HepG2 (cell line): ENCODE measurements at regions of chr7 and their contacts with region 1.

Region 1: DNA sequence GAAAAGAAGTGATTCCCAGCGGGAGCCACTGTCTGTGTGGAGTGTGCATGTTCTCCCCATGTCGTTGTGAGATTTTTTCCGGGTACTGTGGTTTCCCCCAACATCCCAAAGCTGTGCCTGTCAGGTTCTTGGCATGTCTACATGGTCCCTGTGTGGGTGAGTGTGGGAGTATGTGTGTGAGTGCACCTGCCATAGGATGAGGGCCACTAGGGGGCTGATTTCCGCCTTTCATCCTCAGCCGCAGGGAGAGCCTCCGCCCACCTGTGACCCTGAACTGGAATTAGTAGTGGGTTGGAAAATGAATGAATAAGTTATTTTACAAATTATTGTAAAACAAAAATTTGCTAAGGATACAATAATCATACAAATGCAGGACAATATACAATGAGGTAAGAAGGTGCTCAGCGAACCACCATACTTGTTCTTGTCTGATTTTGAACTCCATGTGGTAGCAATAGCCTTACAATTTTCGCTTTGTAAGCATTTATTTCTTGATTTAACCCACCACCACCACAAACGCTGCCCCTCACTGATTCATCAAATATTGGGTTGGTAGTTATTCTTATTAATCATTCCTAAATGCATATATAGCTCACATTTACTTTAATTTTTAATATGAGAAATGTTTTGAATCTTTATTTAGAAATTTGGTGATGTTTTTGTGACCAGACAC is 641.2 kb upstream of the VSTM2A start:
- DNase-seq: no peak
- ATAC-seq: no peak
- H3K4me3 ChIP-seq: no peak overlapping the region
- H3K27ac ChIP-seq: no peak overlapping the region
- H3K4me1 ChIP-seq: no peaks in the 10 kb centered on the region
- H3K27me3 ChIP-seq: no peaks in the 10 kb centered on the region
- CTCF ChIP-seq: no peak
- EP300 ChIP-seq: no peak
- POLR2A ChIP-seq: no peak
- RAD21 ChIP-seq: no peak

Region 2: DNA sequence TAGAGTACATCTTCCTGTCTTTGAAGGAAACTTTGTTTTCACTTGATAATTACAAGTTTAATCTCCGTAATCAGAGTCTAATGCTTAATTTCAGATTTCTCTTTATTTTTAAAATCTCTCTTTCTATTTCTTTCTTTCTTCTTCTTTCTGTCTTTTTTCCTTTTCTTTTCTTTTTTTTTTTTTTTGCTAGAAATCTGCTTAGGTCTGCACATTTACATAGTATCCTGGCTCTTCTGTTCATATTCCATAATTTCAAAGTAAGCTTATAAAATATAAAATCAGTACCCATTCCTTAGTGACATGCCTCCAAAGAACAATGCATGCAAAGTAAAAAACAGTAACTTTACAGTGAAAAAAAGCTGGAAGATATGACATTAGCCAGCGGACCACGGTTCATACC is 39.5 kb after region 1 on chr7:
- CTCF ChIA-PET with region 1: no interaction called
- POLR2A ChIA-PET with region 1: no interaction called
- in situ Hi-C with region 1: no loop called
- intact Hi-C with region 1: loop called (anchors 1 kb)
- DNase-seq: no peak
- ATAC-seq: no peak
- H3K4me3 ChIP-seq: no peak overlapping the region
- H3K27ac ChIP-seq: no peak overlapping the region
- H3K4me1 ChIP-seq: no peaks in the 10 kb centered on the region
- H3K27me3 ChIP-seq: no peaks in the 10 kb centered on the region
- CTCF ChIP-seq: no peak
- EP300 ChIP-seq: no peak
- POLR2A ChIP-seq: no peak
- RAD21 ChIP-seq: no peak